Panc1 (cell line): ENCODE measurements at regions of chr6 and their contacts with region 1.

Region 1: GRCh38 chr6:110712238-110712637 is 103.0 kb downstream of the CDK19 start:
- DNase-seq: no peak
- ATAC-seq: no peak
- H3K4me3 ChIP-seq: no peak overlapping the region
- H3K27ac ChIP-seq: no peak overlapping the region
- H3K4me1 ChIP-seq: no peaks in the 10 kb centered on the region
- H3K27me3 ChIP-seq: no peaks in the 10 kb centered on the region
- CTCF ChIP-seq: no peak

Region 2: GRCh38 chr6:109411034-109411433 is 1301.2 kb before region 1 on chr6:
- CTCF ChIA-PET with region 1: no interaction called
- POLR2A ChIA-PET with region 1: interaction called, 16 read pairs
- in situ Hi-C with region 1: no loop called
- intact Hi-C with region 1: no loop called
- DNase-seq: no peak
- ATAC-seq: no peak
- H3K4me3 ChIP-seq: no peak overlapping the region
- H3K27ac ChIP-seq: no peak overlapping the region
- H3K4me1 ChIP-seq: no peaks in the 10 kb centered on the region
- H3K27me3 ChIP-seq: no peaks in the 10 kb centered on the region; the same call in 1 of the 2 replicates
- CTCF ChIP-seq: no peak

Region 3: GRCh38 chr6:110002676-110003075 is 709.6 kb before region 1 on chr6:
- CTCF ChIA-PET with region 1: no interaction called
- POLR2A ChIA-PET with region 1: no interaction called
- in situ Hi-C with region 1: no loop called
- intact Hi-C with region 1: no loop called
- DNase-seq: no peak
- ATAC-seq: no peak
- H3K4me3 ChIP-seq: no peak overlapping the region
- H3K27ac ChIP-seq: no peak overlapping the region
- H3K4me1 ChIP-seq: no peaks in the 10 kb centered on the region
- H3K27me3 ChIP-seq: peaks cover 18% of the 10 kb centered on the region
- CTCF ChIP-seq: no peak

Region 4: GRCh38 chr6:111038534-111039252 is 326.5 kb after region 1 on chr6:
- CTCF ChIA-PET with region 1: no interaction called
- POLR2A ChIA-PET with region 1: no interaction called
- in situ Hi-C with region 1: no loop called
- intact Hi-C with region 1: no loop called
- DNase-seq: no peak
- ATAC-seq: no peak
- H3K4me3 ChIP-seq: no peak overlapping the region
- H3K27ac ChIP-seq: no peak overlapping the region
- H3K4me1 ChIP-seq: no peaks in the 10 kb centered on the region
- H3K27me3 ChIP-seq: no peaks in the 10 kb centered on the region
- CTCF ChIP-seq: no peak